Heart left ventricle (tissue), 16 donors: ENCODE measurements at regions of chrX and their contacts with region 1.

Region 1: DNA sequence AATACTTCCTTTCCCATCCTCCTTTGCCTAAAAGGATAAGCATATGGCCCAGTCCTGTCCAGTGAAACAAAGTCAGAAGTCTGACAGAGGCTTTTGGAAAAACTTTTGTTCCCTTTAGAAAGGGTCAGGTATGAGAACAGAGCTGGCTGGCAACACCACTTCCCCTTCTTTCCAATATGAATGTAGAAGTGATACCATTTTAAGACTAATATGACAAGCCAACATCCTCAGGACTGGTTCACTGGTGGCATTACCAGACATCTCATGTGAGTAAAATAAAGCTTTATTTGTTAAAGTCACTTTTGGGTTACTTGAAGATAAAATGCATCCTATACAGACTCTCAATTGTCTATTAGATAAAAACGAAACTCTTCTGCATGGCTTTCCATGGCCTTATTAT is 83.6 kb upstream of the PTCHD1 start:
- DNase-seq: no peak
- ATAC-seq: no peak
- H3K4me3 ChIP-seq: no peak overlapping the region
- H3K27ac ChIP-seq: no peak overlapping the region
- H3K4me1 ChIP-seq: no peaks in the 10 kb centered on the region
- H3K27me3 ChIP-seq: no peaks in the 10 kb centered on the region
- CTCF ChIP-seq: no peak
- POLR2A ChIP-seq: no peak

Region 2: GRCh38 chrX:22944945-22945344 is 306.1 kb before region 1 on chrX:
- intact Hi-C with region 1: no loop called
- DNase-seq: no peak
- ATAC-seq: no peak
- H3K4me3 ChIP-seq: no peak overlapping the region
- H3K27ac ChIP-seq: no peak overlapping the region
- H3K4me1 ChIP-seq: no peaks in the 10 kb centered on the region
- H3K27me3 ChIP-seq: no peaks in the 10 kb centered on the region
- CTCF ChIP-seq: no peak
- POLR2A ChIP-seq: no peak

Region 3: DNA sequence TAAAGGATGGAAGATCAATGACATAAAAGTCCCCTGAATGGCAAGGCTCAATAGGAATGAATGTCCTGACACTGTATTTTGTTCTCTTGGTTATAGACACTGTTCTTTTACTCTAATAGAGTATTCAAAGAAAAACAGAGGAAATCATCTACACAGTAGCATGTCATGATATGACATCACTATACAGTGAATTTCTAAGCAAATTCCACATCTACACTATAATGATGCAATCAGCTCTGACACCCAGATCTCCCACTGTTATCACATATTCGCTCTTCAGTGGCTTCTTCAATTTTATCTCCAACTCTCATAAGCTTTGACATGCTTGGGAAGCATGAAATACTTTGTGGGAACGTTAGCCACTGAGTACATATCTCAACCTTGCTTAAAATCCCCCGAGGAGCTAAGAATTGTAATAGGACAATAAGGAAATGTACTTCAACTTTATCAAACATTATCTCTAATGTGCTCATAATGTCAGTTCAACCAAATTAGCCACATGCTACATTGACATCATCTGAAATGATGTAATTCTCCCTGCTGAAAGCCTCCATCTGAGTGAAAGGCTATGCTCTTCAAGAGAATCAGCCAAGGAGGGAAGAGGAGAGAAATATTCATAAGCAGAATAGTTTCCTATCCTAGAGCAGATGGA is 56.0 kb before region 1 on chrX:
- intact Hi-C with region 1: loop called in 1 of 10 experiments (anchors 10 kb)
- DNase-seq: no peak
- ATAC-seq: no peak
- H3K4me3 ChIP-seq: no peak overlapping the region
- H3K27ac ChIP-seq: no peak overlapping the region
- H3K4me1 ChIP-seq: no peaks in the 10 kb centered on the region
- H3K27me3 ChIP-seq: no peaks in the 10 kb centered on the region
- CTCF ChIP-seq: no peak
- POLR2A ChIP-seq: no peak